Caco-2 (cell line): ENCODE measurements at regions of chr10 and their contacts with region 1.

Region 1: DNA sequence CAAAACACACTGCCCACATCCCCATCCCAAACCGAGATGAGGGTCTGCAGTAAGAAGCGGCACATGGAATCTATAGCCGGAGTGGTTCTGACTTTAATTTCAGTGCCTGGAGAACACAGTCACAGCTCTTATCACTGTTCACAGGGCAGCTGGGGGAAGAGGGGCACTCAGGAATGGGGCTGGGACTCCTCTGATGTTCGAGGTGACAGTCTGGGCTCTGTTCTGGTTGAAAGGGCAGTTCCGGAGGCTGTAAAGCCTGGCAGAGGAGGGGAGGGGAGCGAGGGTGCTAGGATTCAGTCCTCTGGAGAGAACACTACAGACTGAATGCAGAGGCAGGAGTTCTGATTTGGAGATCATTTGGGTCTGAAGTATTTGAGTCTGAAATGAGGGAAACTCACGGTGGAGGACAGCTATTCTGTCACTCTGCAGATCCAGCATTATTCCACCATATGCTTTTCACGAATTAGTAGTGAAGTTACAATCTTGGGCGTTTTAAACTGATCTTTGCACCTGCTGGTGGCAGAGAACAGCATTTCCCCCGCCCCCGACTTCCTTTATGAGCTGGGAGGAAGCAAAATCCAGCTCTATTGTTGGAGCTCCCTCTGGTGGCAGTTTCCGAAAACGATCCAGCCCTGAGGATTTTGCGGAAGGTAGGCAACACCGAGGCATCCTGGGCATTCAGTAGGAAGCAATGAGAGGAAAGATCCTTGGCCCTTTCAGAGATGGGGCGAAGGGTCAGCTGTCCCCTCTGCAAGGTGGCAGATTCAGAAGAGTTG is 22.7 kb upstream of the KCNK18 start:
- DNase-seq: peak; percentile 83 to 89
- H3K4me3 ChIP-seq: peak overlapping the region; percentile 67
- H3K4me3 Mint-ChIP-seq: peak overlapping the region; percentile 79
- H3K27ac Mint-ChIP-seq: no peak overlapping the region
- H3K4me1 ChIP-seq: no peaks in the 10 kb centered on the region; the same call in 1 of the 2 replicates
- H3K4me1 Mint-ChIP-seq: peaks cover 7% of the 10 kb centered on the region
- H3K27me3 ChIP-seq: peaks cover 2% of the 10 kb centered on the region; the same call in 1 of the 2 replicates
- H3K27me3 Mint-ChIP-seq: peaks cover 13% of the 10 kb centered on the region
- CTCF ChIP-seq: peak; percentile 81 to 85

Region 2: DNA sequence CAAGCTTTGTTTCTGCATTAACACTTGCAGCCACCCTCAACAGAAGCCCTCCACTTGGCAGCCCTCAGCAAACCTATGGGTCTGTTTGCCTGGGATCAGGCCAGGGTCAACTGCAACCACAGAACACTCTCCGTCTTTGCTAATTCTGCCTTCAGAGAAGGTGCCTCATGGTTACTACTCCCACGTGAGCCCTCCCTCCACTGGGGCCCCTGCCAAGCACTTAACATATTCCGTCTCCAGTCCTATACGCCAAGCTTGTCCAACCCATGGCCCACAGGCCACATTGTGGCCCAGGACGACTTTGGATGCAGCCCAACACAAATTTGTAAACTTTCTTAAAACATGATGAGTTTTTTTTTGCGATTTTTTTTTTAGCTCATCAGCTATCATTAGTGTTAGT is 487.0 kb before region 1 on chr10:
- CTCF ChIA-PET with region 1: interaction called, 3 read pairs
- POLR2A ChIA-PET with region 1: no interaction called
- intact Hi-C with region 1: loop called (anchors 5 kb)
- DNase-seq: no peak
- H3K4me3 ChIP-seq: no peak overlapping the region
- H3K4me3 Mint-ChIP-seq: no peak overlapping the region
- H3K27ac Mint-ChIP-seq: no peak overlapping the region
- H3K4me1 ChIP-seq: no peaks in the 10 kb centered on the region
- H3K4me1 Mint-ChIP-seq: no peaks in the 10 kb centered on the region
- H3K27me3 ChIP-seq: no peaks in the 10 kb centered on the region
- H3K27me3 Mint-ChIP-seq: no peaks in the 10 kb centered on the region
- CTCF ChIP-seq: no peak

Region 3: DNA sequence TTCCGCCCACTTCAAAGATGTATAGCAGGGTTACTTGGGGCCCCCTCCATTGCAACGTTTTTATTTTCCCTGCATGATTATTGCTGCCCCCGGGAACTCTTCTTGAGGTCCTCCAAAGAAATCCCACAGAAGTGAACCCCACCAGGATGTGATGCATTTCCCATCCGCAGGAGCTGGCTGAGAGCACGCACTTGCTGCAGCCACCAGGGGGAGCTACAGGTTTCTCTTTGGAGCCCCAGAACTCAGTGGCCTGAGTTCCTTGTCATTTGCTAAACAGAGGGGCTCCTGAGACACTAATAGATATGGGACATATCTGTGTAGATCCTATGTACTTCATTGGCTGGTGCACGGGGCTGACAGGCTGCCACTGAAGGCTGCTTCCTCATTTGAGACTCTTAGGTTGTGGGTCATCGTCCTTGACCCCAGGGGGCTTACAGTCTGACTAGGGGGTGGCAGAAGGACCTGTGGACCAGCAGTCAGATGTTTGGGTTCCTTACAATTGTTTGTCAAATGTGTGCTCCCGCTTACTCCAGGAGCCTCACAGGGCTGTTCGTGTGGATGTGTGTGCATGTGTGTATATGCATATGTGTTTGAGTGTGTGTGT is 377.6 kb before region 1 on chr10:
- CTCF ChIA-PET with region 1: interaction called, 70 read pairs
- POLR2A ChIA-PET with region 1: no interaction called
- intact Hi-C with region 1: loop called (anchors 1 kb)
- DNase-seq: peak; percentile 75 to 84
- H3K4me3 ChIP-seq: no peak overlapping the region
- H3K4me3 Mint-ChIP-seq: no peak overlapping the region
- H3K27ac Mint-ChIP-seq: no peak overlapping the region
- H3K4me1 ChIP-seq: no peaks in the 10 kb centered on the region
- H3K4me1 Mint-ChIP-seq: no peaks in the 10 kb centered on the region
- H3K27me3 ChIP-seq: no peaks in the 10 kb centered on the region
- H3K27me3 Mint-ChIP-seq: peaks cover 13% of the 10 kb centered on the region
- CTCF ChIP-seq: peak; percentile 87 to 97

Region 4: GRCh38 chr10:116849248-116850057 is 325.2 kb before region 1 on chr10 and contains the start of gene ENO4:
- CTCF ChIA-PET with region 1: interaction called, 10 read pairs
- POLR2A ChIA-PET with region 1: no interaction called
- intact Hi-C with region 1: no loop called
- DNase-seq: peak; percentile 85 to 89
- H3K4me3 ChIP-seq: peak within 1 kb of the TSS; percentile 68
- H3K4me3 Mint-ChIP-seq: peak within 1 kb of the TSS; percentile 80
- H3K27ac Mint-ChIP-seq: peak within 1 kb of the TSS; percentile 34
- H3K4me1 ChIP-seq: no peaks in the 10 kb centered on the region
- H3K4me1 Mint-ChIP-seq: peaks cover 26% of the 10 kb centered on the region
- H3K27me3 ChIP-seq: no peaks in the 10 kb centered on the region
- H3K27me3 Mint-ChIP-seq: peaks cover 8% of the 10 kb centered on the region
- CTCF ChIP-seq: no peak
- total RNA-seq, gene ENO4: not detected in 2 replicates

Region 5: GRCh38 chr10:117112220-117112619 is 62.4 kb before region 1 on chr10:
- CTCF ChIA-PET with region 1: interaction called, 28 read pairs
- POLR2A ChIA-PET with region 1: no interaction called
- intact Hi-C with region 1: loop called (anchors 2 kb)
- DNase-seq: peak in 1 of 2 experiments; percentile 14
- H3K4me3 ChIP-seq: no peak overlapping the region
- H3K4me3 Mint-ChIP-seq: no peak overlapping the region
- H3K27ac Mint-ChIP-seq: no peak overlapping the region
- H3K4me1 ChIP-seq: no peaks in the 10 kb centered on the region
- H3K4me1 Mint-ChIP-seq: no peaks in the 10 kb centered on the region
- H3K27me3 ChIP-seq: no peaks in the 10 kb centered on the region
- H3K27me3 Mint-ChIP-seq: peaks cover 13% of the 10 kb centered on the region
- CTCF ChIP-seq: peak; percentile 38 to 76

Region 6: DNA sequence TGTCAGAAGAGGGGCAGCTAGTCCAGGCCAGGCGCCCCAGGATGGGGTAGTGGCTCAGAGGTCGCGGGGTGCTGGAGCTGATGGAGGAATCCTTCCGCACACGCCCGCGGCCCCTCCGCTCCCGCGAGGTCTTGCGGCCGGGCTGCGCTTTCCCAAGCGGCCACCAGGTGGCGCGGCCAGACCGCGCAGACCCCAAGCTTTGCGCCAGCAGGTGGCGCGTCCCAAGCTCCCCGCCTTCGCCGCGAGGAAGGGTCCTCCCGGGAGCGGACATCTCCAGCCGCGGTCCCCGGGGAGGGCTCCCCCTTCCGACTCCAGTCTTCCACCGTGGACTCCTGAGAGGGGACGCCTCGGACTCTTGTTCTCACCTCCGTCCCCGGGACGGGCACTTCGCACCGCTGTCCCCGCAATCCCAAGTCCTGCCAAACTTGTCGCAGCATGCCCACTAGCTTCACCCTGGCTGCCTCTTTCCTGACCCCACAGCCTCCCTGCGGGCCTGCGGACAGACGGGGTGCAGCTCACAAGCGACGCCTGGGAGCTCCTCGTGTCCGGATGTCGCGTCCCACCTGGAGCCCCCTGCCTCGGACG is 42.1 kb after region 1 on chr10:
- CTCF ChIA-PET with region 1: interaction called, 11 read pairs
- POLR2A ChIA-PET with region 1: no interaction called
- intact Hi-C with region 1: no loop called
- DNase-seq: peak; percentile 77 to 90
- H3K4me3 ChIP-seq: peak overlapping the region; percentile 59
- H3K4me3 Mint-ChIP-seq: peak overlapping the region; percentile 90
- H3K27ac Mint-ChIP-seq: no peak overlapping the region
- H3K4me1 ChIP-seq: 0 out of 2 replicates have a peak, but pooled peaks cover 5% of the 10 kb centered on the region
- H3K4me1 Mint-ChIP-seq: no peaks in the 10 kb centered on the region
- H3K27me3 ChIP-seq: no peaks in the 10 kb centered on the region; the same call in 1 of the 2 replicates
- H3K27me3 Mint-ChIP-seq: peaks cover 13% of the 10 kb centered on the region
- CTCF ChIP-seq: peak; percentile 100

Region 7: DNA sequence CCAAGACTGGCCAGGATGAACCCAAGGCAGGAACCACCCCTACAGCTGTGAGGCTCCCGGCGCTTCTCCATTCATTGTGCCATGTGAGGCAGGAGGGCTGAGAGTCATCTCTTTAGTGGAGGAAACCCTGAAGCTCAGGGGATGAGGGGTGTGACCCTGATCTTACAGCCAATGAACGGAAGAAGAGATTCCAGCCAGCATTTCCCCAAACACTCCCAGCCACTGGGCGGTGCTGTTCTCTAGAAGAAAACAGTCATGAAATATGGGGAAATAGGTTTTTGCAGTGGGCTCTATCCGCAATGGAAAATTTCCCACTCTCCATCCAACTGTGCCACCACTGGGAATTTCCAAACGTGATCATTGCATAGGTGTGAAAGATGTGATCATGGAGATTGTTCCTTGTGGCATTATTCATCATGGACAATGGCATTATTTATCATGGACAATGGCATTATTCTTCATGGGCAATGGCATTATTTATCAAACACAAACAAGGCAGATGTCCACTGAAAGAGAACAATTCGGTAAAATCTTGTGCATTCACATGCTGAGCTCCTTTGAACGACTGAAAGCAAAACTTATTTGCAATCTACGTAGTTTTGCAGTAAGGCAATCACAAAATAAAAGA is 52.3 kb after region 1 on chr10:
- CTCF ChIA-PET with region 1: no interaction called
- POLR2A ChIA-PET with region 1: no interaction called
- intact Hi-C with region 1: no loop called
- DNase-seq: peak in 1 of 2 experiments; percentile 52
- H3K4me3 ChIP-seq: no peak overlapping the region
- H3K4me3 Mint-ChIP-seq: no peak overlapping the region
- H3K27ac Mint-ChIP-seq: no peak overlapping the region
- H3K4me1 ChIP-seq: no peaks in the 10 kb centered on the region
- H3K4me1 Mint-ChIP-seq: no peaks in the 10 kb centered on the region
- H3K27me3 ChIP-seq: no peaks in the 10 kb centered on the region; the same call in 1 of the 2 replicates
- H3K27me3 Mint-ChIP-seq: peaks cover 20% of the 10 kb centered on the region
- CTCF ChIP-seq: peak; percentile 33 to 87